Common myeloid progenitor, CD34-positive (primary cell): ENCODE measurements at regions of chr1 and their contacts with region 1.

Region 1: GRCh38 chr1:240515505-240515904 is 96.5 kb downstream of the GREM2 start:
- DNase-seq: no peak
- H3K4me3 ChIP-seq: no peak overlapping the region
- H3K27ac ChIP-seq: no peak overlapping the region
- H3K4me1 ChIP-seq: no peaks in the 10 kb centered on the region
- H3K27me3 ChIP-seq: no peaks in the 10 kb centered on the region

Region 2: DNA sequence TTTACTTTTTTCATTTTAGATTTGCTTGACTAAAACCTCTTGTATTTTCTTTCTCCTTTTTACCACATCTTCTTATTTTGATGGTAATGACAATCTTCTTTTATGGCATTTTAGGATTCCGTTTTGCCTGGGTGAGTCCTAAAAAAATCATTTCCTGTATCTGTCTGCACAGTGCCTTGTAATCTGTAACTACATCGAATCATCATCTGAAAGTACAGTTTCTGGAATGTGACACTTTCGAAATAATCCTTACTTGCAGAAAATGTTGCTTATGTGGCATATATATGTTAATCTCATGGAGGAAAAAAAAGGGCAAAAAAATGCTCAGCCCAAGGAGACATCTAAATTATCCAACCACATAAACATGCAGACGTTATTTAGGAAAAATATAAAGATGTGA is 67.4 kb after region 1 on chr1:
- CTCF ChIA-PET with region 1: no interaction called
- POLR2A ChIA-PET with region 1: interaction called, 14 read pairs
- DNase-seq: no peak
- H3K4me3 ChIP-seq: no peak overlapping the region
- H3K27ac ChIP-seq: no peak overlapping the region
- H3K4me1 ChIP-seq: no peaks in the 10 kb centered on the region
- H3K27me3 ChIP-seq: peaks cover 0 to 16% (median 0%) of the 10 kb centered on the region in 5 experiments